Activated CD8-positive, alpha-beta memory T cell treated with anti-CD3 and anti-CD28 coated beads, Interleukin-2, amount 10 ng/mL, durations not matched to agents 7 days and 5 days (primary cell): ENCODE measurements at regions of chr21 and their contacts with region 1.

Region 1: DNA sequence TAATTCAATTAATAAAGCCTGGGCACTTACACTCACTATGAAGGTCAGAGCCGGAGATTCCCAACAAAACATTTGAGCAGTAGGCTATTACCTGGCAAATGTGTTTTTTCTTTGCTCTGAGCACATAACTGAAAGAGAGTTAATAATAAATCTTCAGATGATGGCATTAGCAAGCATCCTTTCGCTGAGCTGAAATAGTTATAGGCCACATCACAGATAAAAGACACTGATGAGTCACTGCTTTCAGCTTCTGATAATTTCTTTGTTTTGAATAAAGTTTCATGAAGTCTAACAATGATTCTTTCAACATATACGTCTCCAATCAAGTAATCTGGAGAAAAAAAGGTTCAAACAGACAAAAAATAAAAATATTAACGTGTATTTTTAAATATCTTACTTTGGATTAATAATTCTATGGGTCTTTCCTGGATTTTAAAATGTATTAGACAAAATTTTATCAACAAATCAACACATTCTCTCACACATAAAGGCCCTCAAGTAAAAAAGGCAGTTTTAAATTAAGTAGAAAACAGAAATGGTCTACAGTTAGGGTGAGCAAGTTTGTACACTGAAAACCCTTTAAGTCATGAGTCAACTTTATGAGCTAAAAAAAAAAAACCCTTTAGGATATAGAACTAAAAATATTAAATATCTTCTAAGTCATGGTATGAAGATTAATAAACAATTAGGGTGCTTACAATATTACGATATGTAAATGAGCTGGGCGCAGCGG is 33.1 kb downstream of the LTN1 start:
- DNase-seq: no peak
- ATAC-seq: no peak
- H3K4me3 Mint-ChIP-seq: no peak overlapping the region
- H3K27ac Mint-ChIP-seq: no peak overlapping the region
- H3K4me1 Mint-ChIP-seq: peaks cover 4% of the 10 kb centered on the region
- H3K27me3 Mint-ChIP-seq: no peaks in the 10 kb centered on the region

Region 2: DNA sequence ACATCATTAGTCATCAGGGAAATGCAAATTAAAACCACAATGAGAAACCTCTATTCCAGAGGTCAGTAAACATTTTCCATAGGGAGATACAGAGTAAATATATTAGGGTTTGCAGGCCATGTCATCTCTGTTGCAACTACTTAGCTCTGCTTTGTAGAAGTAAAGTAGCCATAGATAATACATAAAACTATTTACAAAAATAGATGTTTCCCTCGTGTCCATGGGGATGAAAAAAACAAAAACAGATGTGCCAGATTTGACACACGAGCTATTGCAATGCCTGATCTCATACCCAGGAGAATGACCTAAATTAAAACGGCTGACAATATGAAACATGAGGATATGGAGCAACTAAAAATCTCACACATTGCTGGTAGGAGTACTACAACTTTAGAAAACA is 15.9 kb after region 1 on chr21:
- CTCF ChIA-PET with region 1: interaction called, 11 read pairs
- DNase-seq: no peak
- ATAC-seq: no peak
- H3K4me3 Mint-ChIP-seq: no peak overlapping the region
- H3K27ac Mint-ChIP-seq: no peak overlapping the region
- H3K4me1 Mint-ChIP-seq: no peaks in the 10 kb centered on the region
- H3K27me3 Mint-ChIP-seq: no peaks in the 10 kb centered on the region

Region 3: DNA sequence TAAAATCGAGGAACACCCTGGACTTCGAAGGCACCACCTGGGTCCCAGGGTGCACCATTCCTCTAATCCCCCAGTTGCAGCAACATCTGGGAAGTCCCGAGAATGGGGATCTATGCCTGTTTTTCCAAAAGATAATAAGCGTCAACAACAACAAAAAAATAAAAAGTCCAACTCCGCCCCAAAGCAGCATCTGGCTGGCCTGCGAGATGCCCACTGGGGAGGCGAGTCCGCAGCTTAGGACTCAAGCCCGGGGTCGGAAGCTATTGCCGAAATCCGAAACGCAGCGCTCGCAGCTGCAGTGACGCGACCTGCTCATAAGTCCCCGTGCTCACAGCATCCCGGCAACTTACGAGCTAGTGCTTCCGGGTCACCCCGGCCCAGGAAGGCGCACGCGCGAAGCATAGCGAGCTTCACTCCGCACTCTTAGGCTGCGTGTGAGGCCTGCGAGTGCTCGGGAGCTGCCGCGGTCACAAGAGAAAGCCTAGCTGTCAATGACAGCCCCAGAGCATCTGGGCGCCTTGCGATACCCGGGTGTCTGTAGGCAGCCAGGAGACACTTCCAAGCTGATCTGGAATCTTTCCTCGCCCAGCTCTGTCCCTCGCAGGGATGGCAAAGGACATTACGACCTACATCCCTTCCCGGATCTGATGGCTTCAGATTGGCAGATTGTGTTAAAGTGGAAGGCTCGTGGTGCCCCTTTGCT is 43.1 kb after region 1 on chr21:
- CTCF ChIA-PET with region 1: no interaction called
- DNase-seq: peak; percentile 97
- ATAC-seq: peak; percentile 100
- H3K4me3 Mint-ChIP-seq: peak overlapping the region; percentile 87
- H3K27ac Mint-ChIP-seq: peak overlapping the region; percentile 95
- H3K4me1 Mint-ChIP-seq: peaks cover 12% of the 10 kb centered on the region
- H3K27me3 Mint-ChIP-seq: no peaks in the 10 kb centered on the region

Region 4: GRCh38 chr21:29064850-29065481 is 105.4 kb after region 1 on chr21:
- CTCF ChIA-PET with region 1: no interaction called
- DNase-seq: no peak
- ATAC-seq: no peak
- H3K4me3 Mint-ChIP-seq: no peak overlapping the region
- H3K27ac Mint-ChIP-seq: no peak overlapping the region
- H3K4me1 Mint-ChIP-seq: peaks cover 13% of the 10 kb centered on the region
- H3K27me3 Mint-ChIP-seq: no peaks in the 10 kb centered on the region